ENCODE measurements at regions of chr6 and their contacts with region 1.

Region 1: GRCh38 chr6:42782622-42783176 is 847 bp downstream of the BICRAL start:
- DNase-seq: peak; percentile 90
- H3K4me3 ChIP-seq: peak overlapping the region; percentile 80 to 98 (median 90)
- H3K27ac ChIP-seq: peak overlapping the region; percentile 96 to 100 (median 100)
- H3K4me1 ChIP-seq: peaks cover 0 to 44% (median 38%) of the 10 kb centered on the region in 4 donors
- H3K27me3 ChIP-seq: no peaks in the 10 kb centered on the region
- CTCF ChIP-seq: no peak
- EP300 ChIP-seq: no peak
- POLR2A ChIP-seq: peak; percentile 70 to 78

Region 2: GRCh38 chr6:42664718-42665117 is 118.0 kb before region 1 on chr6:
- intact Hi-C with region 1: no loop called
- DNase-seq: no peak
- H3K4me3 ChIP-seq: no peak overlapping the region
- H3K27ac ChIP-seq: no peak overlapping the region
- H3K4me1 ChIP-seq: peaks cover 0 to 7% (median 0%) of the 10 kb centered on the region in 4 donors
- H3K27me3 ChIP-seq: no peaks in the 10 kb centered on the region
- CTCF ChIP-seq: no peak
- EP300 ChIP-seq: no peak
- POLR2A ChIP-seq: no peak

Region 3: DNA sequence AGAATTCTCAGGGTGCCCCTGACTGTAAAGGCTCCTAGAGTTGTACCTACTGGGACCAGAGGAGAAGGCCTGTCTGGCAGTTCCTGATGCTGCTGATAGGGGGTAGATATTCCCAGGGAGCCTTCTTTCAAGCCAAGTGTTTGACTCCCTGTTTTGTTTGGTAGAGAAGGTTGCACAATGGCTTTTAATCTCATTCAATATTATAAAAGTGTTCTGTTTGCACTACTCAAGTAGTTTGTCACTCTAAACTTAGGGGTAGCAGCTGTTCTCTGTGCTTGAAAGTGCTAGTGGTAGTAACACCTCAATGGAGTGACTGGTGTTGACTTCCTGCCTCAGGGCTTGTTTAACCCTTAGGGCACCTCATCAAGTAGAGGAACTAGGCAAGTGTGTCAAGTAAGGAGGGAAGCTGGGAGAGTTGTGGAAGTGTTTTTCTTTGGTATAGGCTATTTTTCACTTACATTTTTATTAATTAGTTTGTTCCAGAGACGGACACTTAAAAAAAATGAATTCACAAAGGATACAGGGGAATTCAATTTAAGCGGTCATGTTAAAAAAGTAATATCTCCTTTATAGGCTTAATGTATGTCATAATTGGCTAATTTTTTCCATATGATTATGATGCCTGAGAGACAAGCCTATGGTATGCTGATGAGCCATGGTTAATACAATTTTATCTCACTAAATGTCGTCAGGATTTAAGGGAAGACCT is 37.3 kb after region 1 on chr6:
- intact Hi-C with region 1: loop called (anchors 5 kb)
- DNase-seq: no peak
- H3K4me3 ChIP-seq: no peak overlapping the region
- H3K27ac ChIP-seq: peak overlapping the region; percentile 69 to 82 (median 78)
- H3K4me1 ChIP-seq: peaks cover 0 to 37% (median 21%) of the 10 kb centered on the region in 4 donors
- H3K27me3 ChIP-seq: no peaks in the 10 kb centered on the region
- CTCF ChIP-seq: peak in 2 of 4 experiments; percentile 14 to 29
- EP300 ChIP-seq: no peak
- POLR2A ChIP-seq: no peak

Region 4: DNA sequence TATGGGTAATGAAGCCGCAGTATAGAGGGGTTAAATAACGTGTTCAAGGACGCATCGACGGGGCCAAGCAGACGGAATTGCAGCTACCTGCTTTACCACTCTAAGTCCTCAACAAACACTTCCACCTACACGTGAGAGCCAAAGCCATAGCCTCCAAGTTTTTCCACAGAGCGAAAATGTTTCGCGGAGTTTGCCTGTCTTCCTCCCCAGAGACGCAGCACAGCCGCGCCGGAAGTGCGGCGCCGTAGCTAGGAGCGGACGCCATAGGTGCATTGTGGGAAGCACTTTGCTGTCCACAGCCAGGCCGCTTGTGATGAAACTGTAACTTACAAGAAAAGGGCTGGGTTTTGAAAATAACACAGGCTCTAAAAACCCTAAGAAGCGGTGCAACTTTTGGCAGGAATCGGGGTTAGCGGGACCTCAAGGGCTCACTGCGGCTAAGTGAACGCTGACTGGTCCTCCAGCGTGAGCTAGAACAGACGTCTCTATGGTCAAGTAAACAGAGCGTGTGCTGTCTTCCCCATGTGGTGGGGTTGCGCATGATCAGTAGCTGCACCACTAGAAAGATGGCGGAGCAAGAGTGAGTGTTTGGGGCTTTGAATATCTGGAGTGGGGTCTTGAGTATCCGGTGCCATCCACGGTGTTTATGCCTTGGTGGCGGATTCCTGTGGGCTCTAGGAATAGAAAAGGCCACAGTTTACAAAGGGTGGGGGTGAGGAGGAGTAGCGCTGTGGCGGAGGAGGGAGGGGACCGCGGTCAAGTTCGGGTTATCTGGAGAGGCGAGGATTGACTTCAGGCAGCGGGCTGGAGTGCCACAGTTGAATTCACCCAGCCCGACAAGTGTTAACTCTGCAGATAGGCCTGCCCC is 96.9 kb after region 1 on chr6 and contains the start of gene RPL7L1:
- intact Hi-C with region 1: loop called (anchors 2 kb)
- DNase-seq: peak; percentile 93
- H3K4me3 ChIP-seq: peak within 1 kb of the TSS; percentile 54 to 71 (median 60)
- H3K27ac ChIP-seq: peak within 1 kb of the TSS; percentile 87 to 92 (median 92)
- H3K4me1 ChIP-seq: peaks cover 0 to 40% (median 22%) of the 10 kb centered on the region in 4 donors
- H3K27me3 ChIP-seq: no peaks in the 10 kb centered on the region
- CTCF ChIP-seq: peak in 1 of 4 experiments; percentile 29
- EP300 ChIP-seq: no peak
- POLR2A ChIP-seq: peak in 1 of 2 donors; percentile 54
- total RNA-seq, gene RPL7L1: 67.6 to 79.0 (median 75.7) TPM